Posterior vena cava (tissue), 2 donors: ENCODE measurements at regions of chr15 and their contacts with region 1.

Region 1: GRCh38 chr15:75862796-75863195 is 19.5 kb downstream of the UBE2Q2 start:
- DNase-seq: no peak

Region 2: DNA sequence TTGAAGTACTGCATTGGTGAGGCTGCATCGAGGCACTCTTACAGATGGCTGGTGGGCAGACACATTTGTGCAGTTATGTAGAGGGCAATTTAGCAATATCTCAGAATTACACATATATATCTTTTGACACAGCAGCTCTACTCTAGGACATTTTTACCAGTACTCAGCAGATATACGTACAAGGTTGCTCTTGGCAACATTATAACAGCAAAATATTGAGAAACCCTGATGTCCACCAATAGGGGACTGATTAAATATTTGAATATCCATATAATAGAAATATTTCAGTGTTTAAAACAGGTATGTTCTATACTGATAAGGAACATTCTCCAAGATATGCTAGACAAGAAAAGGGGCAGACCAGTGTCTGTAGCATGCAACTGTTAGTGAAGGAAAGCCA is 32.9 kb after region 1 on chr15:
- intact Hi-C with region 1: loop called in 1 of 2 experiments (anchors 1 kb)
- DNase-seq: no peak